CD4-positive, alpha-beta T cell (primary cell): ENCODE measurements at regions of chr14 and their contacts with region 1.

Region 1: GRCh38 chr14:91373591-91374254 is 43.9 kb downstream of the CCDC88C start:
- DNase-seq: peak in 9 of 14 experiments; percentile 47 to 82 (median 61)
- ATAC-seq: peak; percentile 64
- H3K4me3 ChIP-seq: peak overlapping the region; percentile 43
- H3K4me3 Mint-ChIP-seq: peak overlapping the region; percentile 90
- H3K27ac ChIP-seq: peak overlapping the region; percentile 69 to 80
- H3K27ac Mint-ChIP-seq: peak overlapping the region; percentile 96
- H3K4me1 ChIP-seq: peaks cover 100% of the 10 kb centered on the region
- H3K4me1 Mint-ChIP-seq: peaks cover 100% of the 10 kb centered on the region
- H3K27me3 ChIP-seq: no peaks in the 10 kb centered on the region
- H3K27me3 Mint-ChIP-seq: no peaks in the 10 kb centered on the region
- CTCF ChIP-seq: no peak

Region 2: GRCh38 chr14:91388551-91388975 is 14.8 kb after region 1 on chr14:
- CTCF ChIA-PET with region 1: interaction called, 9 read pairs
- POLR2A ChIA-PET with region 1: interaction called, 15 read pairs
- intact Hi-C with region 1: loop called (anchors 2 kb)
- DNase-seq: peak in 10 of 14 experiments; percentile 32 to 82 (median 48)
- ATAC-seq: peak; percentile 81
- H3K4me3 ChIP-seq: peak overlapping the region; percentile 17
- H3K4me3 Mint-ChIP-seq: peak overlapping the region; percentile 72
- H3K27ac ChIP-seq: peak overlapping the region; percentile 44 to 50
- H3K27ac Mint-ChIP-seq: peak overlapping the region; percentile 88
- H3K4me1 ChIP-seq: peaks cover 100% of the 10 kb centered on the region
- H3K4me1 Mint-ChIP-seq: peaks cover 92% of the 10 kb centered on the region
- H3K27me3 ChIP-seq: no peaks in the 10 kb centered on the region
- H3K27me3 Mint-ChIP-seq: no peaks in the 10 kb centered on the region
- CTCF ChIP-seq: no peak

Region 3: GRCh38 chr14:91396959-91397815 is 23.5 kb after region 1 on chr14:
- CTCF ChIA-PET with region 1: interaction called, 9 read pairs
- POLR2A ChIA-PET with region 1: interaction called, 37 read pairs
- intact Hi-C with region 1: loop called in 1 of 2 experiments (anchors 2 kb)
- DNase-seq: peak in 13 of 14 experiments; percentile 48 to 87 (median 64)
- ATAC-seq: peak; percentile 76
- H3K4me3 ChIP-seq: peak overlapping the region; percentile 67
- H3K4me3 Mint-ChIP-seq: peak overlapping the region; percentile 78
- H3K27ac ChIP-seq: peak overlapping the region; percentile 26 to 66
- H3K27ac Mint-ChIP-seq: peak overlapping the region; percentile 98
- H3K4me1 ChIP-seq: peaks cover 98% of the 10 kb centered on the region
- H3K4me1 Mint-ChIP-seq: peaks cover 90% of the 10 kb centered on the region
- H3K27me3 ChIP-seq: no peaks in the 10 kb centered on the region
- H3K27me3 Mint-ChIP-seq: no peaks in the 10 kb centered on the region
- CTCF ChIP-seq: no peak

Region 4: GRCh38 chr14:91402771-91403600 is 29.3 kb after region 1 on chr14:
- CTCF ChIA-PET with region 1: interaction called, 6 read pairs
- POLR2A ChIA-PET with region 1: interaction called, 37 read pairs
- intact Hi-C with region 1: loop called in 1 of 2 experiments (anchors 5 kb)
- DNase-seq: peak in 1 of 14 experiments; percentile 27
- ATAC-seq: no peak
- H3K4me3 ChIP-seq: peak overlapping the region; percentile 17
- H3K4me3 Mint-ChIP-seq: peak overlapping the region; percentile 81
- H3K27ac ChIP-seq: peak overlapping the region; percentile 70 to 85
- H3K27ac Mint-ChIP-seq: peak overlapping the region; percentile 98
- H3K4me1 ChIP-seq: peaks cover 98% of the 10 kb centered on the region
- H3K4me1 Mint-ChIP-seq: peaks cover 90% of the 10 kb centered on the region
- H3K27me3 ChIP-seq: no peaks in the 10 kb centered on the region
- H3K27me3 Mint-ChIP-seq: no peaks in the 10 kb centered on the region
- CTCF ChIP-seq: no peak

Region 5: GRCh38 chr14:91410771-91411536 is 37.2 kb after region 1 on chr14:
- CTCF ChIA-PET with region 1: interaction called, 7 read pairs
- POLR2A ChIA-PET with region 1: interaction called, 103 read pairs
- intact Hi-C with region 1: loop called (anchors 1 to 5 kb)
- DNase-seq: peak in 4 of 14 experiments; percentile 22 to 70 (median 47)
- ATAC-seq: no peak
- H3K4me3 ChIP-seq: peak overlapping the region; percentile 34
- H3K4me3 Mint-ChIP-seq: peak overlapping the region; percentile 89
- H3K27ac ChIP-seq: peak overlapping the region; percentile 85 to 88
- H3K27ac Mint-ChIP-seq: peak overlapping the region; percentile 98
- H3K4me1 ChIP-seq: peaks cover 96% of the 10 kb centered on the region
- H3K4me1 Mint-ChIP-seq: peaks cover 90% of the 10 kb centered on the region
- H3K27me3 ChIP-seq: no peaks in the 10 kb centered on the region
- H3K27me3 Mint-ChIP-seq: no peaks in the 10 kb centered on the region
- CTCF ChIP-seq: no peak